OCI-LY7 (cell line): ENCODE measurements at regions of chr13 and their contacts with region 1.

Region 1: GRCh38 chr13:75442736-75443234 is 39.2 kb downstream of the TBC1D4 start:
- DNase-seq: no peak
- H3K4me3 ChIP-seq: no peak overlapping the region
- H3K27ac ChIP-seq: no peak overlapping the region
- H3K4me1 ChIP-seq: no peaks in the 10 kb centered on the region
- CTCF ChIP-seq: no peak

Region 2: GRCh38 chr13:75432045-75432444 is 10.7 kb before region 1 on chr13:
- CTCF ChIA-PET with region 1: interaction called, 3 read pairs
- POLR2A ChIA-PET with region 1: interaction called, 10 read pairs
- intact Hi-C with region 1: no loop called
- DNase-seq: no peak
- H3K4me3 ChIP-seq: no peak overlapping the region
- H3K27ac ChIP-seq: no peak overlapping the region
- H3K4me1 ChIP-seq: peaks cover 61% of the 10 kb centered on the region
- CTCF ChIP-seq: peak; percentile 69

Region 3: DNA sequence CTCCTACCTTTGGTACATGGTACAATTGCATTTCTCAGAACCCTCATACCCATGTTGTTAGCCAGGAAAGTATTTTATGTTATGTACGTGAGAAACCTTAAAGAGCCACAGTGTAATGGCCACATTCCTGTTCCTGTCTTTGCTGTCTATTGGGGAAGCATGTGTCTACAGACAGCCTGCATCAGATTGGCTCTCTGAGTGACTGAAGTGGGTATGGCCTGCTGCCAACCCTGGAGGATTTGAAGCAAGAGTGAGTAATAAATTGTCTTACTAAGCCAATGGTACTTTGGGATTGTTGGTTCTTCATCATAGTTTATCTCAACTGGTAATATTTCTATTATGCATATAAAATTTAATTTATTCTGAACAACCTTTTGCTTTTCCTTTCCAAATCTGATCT is 767.5 kb after region 1 on chr13:
- CTCF ChIA-PET with region 1: no interaction called
- POLR2A ChIA-PET with region 1: no interaction called
- intact Hi-C with region 1: no loop called
- DNase-seq: no peak
- H3K4me3 ChIP-seq: no peak overlapping the region
- H3K27ac ChIP-seq: no peak overlapping the region
- H3K4me1 ChIP-seq: peaks cover 12% of the 10 kb centered on the region
- CTCF ChIP-seq: no peak